ENCODE measurements at regions of chr17 and their contacts with region 1.

Region 1: GRCh38 chr17:55264645-55265298 is at the start of gene HLF:
- DNase-seq: peak; percentile 63
- ATAC-seq: peak; percentile 97
- H3K4me3 ChIP-seq: no peak within 1 kb of the TSS; the same call in 1 of the 2 replicates
- H3K27ac ChIP-seq: no peak within 1 kb of the TSS
- H3K4me1 ChIP-seq: 0 out of 2 replicates have a peak, but pooled peaks cover 3% of the 10 kb centered on the region
- H3K27me3 ChIP-seq: peaks cover 53% of the 10 kb centered on the region
- CTCF ChIP-seq: no peak
- POLR2A ChIP-seq: no peak
- RAD21 ChIP-seq: no peak
- total RNA-seq, gene HLF: 0.18 TPM in 1 of 2 replicates, not detected in the other

Region 2: GRCh38 chr17:55238179-55238930 is 26.4 kb before region 1 on chr17:
- CTCF ChIA-PET with region 1: no interaction called
- POLR2A ChIA-PET with region 1: no interaction called
- dilution Hi-C with region 1: no loop called
- in situ Hi-C with region 1: no loop called
- intact Hi-C with region 1: loop called (anchors 1 kb)
- DNase-seq: peak; percentile 85
- ATAC-seq: peak; percentile 99
- H3K4me3 ChIP-seq: peak overlapping the region; percentile 46
- H3K27ac ChIP-seq: no peak overlapping the region
- H3K4me1 ChIP-seq: no peaks in the 10 kb centered on the region
- H3K27me3 ChIP-seq: peaks cover 2% of the 10 kb centered on the region; the same call in 1 of the 2 replicates
- CTCF ChIP-seq: no peak
- POLR2A ChIP-seq: no peak
- RAD21 ChIP-seq: no peak

Region 3: GRCh38 chr17:55314784-55315491 is 50.2 kb after region 1 on chr17:
- CTCF ChIA-PET with region 1: no interaction called
- POLR2A ChIA-PET with region 1: no interaction called
- dilution Hi-C with region 1: no loop called
- in situ Hi-C with region 1: no loop called
- intact Hi-C with region 1: no loop called
- DNase-seq: no peak
- ATAC-seq: no peak
- H3K4me3 ChIP-seq: no peak overlapping the region
- H3K27ac ChIP-seq: no peak overlapping the region
- H3K4me1 ChIP-seq: no peaks in the 10 kb centered on the region
- H3K27me3 ChIP-seq: peaks cover 3% of the 10 kb centered on the region; the same call in 1 of the 2 replicates
- CTCF ChIP-seq: no peak
- POLR2A ChIP-seq: no peak
- RAD21 ChIP-seq: no peak

Measured in IMR-90 (cell line).